ENCODE measurements at regions of chr5 and their contacts with region 1.

Region 1: DNA sequence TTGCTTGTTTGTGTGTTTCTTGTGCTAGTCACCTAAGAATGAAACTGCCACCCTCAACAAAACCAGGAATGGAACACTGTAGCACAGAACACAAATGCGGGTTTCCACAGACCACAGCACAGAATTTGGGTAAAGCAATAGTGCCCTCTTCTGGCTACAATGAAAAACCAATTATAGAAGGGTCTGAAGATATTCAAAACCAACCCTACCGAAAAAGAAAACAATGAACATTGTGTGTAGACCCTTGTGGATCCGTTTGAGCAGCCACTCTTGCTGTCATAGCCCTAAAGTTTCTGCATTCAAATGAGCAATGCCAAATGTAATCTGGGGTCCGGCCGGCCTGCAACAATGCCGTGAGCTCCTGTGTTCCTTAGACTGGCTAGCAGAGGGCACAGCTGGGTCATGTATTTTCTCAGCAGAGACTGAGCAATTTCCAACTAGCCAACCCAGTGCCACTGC is 8.3 kb upstream of the ENC1 start:
- DNase-seq: peak; percentile 66
- H3K4me3 ChIP-seq: no peak overlapping the region
- H3K27ac ChIP-seq: no peak overlapping the region
- H3K4me1 ChIP-seq: no peaks in the 10 kb centered on the region
- CTCF ChIP-seq: peak; percentile 94

Region 2: DNA sequence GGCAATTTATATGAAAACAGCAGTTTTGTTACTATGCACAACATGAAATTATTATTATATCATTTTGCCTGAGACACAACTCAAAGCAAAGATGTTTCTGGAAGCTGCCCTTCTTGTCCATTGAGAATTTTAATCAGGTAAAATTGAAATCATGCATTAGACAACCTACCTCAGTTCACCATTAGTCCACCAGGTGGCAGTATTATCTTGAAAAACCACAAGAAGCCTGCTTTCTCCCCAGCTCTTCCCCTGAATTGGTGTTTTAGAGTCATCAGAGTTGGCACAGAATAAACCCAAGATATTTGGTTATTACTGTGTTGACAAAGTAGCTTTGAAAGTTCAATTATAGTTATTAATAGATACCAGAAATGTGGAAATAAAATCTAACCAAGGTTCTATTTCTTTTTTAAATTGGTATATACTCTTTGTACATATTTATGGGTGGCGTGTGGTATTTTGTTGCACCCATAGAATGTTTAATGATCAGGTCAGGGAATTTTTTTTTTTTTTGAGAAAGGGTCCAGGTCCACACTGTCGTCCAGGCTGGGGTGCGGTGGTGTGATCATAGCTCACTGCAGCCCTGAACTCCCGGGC is 1057.7 kb before region 1 on chr5:
- CTCF ChIA-PET with region 1: no interaction called
- POLR2A ChIA-PET with region 1: no interaction called
- intact Hi-C with region 1: loop called (anchors 5 kb)
- DNase-seq: peak; percentile 77
- H3K4me3 ChIP-seq: no peak overlapping the region
- H3K27ac ChIP-seq: no peak overlapping the region
- H3K4me1 ChIP-seq: no peaks in the 10 kb centered on the region
- CTCF ChIP-seq: peak; percentile 94

Region 3: DNA sequence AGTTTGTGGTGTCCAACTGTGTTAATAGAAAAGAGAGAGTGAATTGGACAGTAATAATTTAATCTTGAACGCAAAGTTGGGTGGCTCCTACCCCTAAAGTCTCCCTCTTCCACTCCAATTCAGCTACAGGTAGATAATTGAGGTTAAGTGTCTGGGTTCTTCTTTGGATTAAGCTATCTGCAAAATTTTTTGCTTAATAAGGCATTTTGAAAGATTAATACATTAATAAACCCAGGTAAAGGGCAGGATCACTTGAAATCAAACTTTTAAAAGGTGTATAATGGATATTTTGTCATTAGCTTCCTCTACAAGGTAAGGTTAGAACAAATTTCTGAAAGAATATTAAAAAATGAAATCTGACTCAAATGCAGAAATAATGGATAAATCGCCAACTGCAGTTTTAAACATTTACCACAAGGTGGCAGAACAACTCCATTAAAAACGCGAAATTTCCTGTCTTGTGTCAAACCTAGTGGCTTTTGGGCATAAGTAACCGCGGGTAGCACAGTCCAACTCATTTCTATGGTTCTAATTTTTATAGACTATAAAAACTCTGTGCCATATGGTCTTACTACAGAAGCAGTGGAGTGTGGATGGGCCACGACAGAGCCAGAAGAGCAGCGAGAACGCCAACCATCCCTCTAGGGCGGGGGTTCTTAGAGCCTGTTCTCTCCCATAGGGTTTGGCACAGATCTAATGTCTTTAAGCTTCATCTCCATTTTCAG is 746.4 kb before region 1 on chr5:
- CTCF ChIA-PET with region 1: interaction called, 5 read pairs
- POLR2A ChIA-PET with region 1: interaction called, 3 read pairs
- intact Hi-C with region 1: loop called (anchors 1 kb)
- DNase-seq: peak; percentile 77
- H3K4me3 ChIP-seq: no peak overlapping the region
- H3K27ac ChIP-seq: no peak overlapping the region
- H3K4me1 ChIP-seq: peaks cover 4% of the 10 kb centered on the region
- CTCF ChIP-seq: peak; percentile 97

Region 4: GRCh38 chr5:74035521-74035981 is 613.3 kb before region 1 on chr5:
- CTCF ChIA-PET with region 1: no interaction called
- POLR2A ChIA-PET with region 1: no interaction called
- intact Hi-C with region 1: loop called (anchors 2 kb)
- DNase-seq: peak; percentile 35
- H3K4me3 ChIP-seq: no peak overlapping the region
- H3K27ac ChIP-seq: no peak overlapping the region
- H3K4me1 ChIP-seq: no peaks in the 10 kb centered on the region
- CTCF ChIP-seq: peak; percentile 65

Region 5: DNA sequence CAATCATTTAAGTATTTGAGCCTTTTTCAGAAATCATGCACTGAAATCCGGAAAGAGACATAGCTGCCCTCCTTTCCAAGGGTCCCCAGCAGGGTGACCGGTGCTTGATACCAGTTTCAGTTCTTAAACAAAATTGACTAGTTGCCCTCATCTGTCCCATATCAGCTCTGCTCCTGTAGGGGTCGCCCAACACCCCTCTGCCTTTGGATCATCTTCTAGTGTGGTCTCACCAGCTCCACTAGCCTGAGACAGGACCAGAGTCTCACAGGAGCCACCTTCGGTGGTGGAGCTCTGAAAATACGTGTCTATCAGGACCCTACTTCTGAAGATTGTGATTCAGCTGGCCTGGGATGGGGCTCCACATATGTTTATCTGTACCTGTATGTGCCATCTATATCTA is 436.5 kb before region 1 on chr5:
- CTCF ChIA-PET with region 1: no interaction called
- POLR2A ChIA-PET with region 1: no interaction called
- intact Hi-C with region 1: loop called (anchors 5 kb)
- DNase-seq: peak; percentile 35
- H3K4me3 ChIP-seq: no peak overlapping the region
- H3K27ac ChIP-seq: no peak overlapping the region
- H3K4me1 ChIP-seq: no peaks in the 10 kb centered on the region
- CTCF ChIP-seq: peak; percentile 71

Region 6: GRCh38 chr5:74822288-74822687 is 173.4 kb after region 1 on chr5:
- CTCF ChIA-PET with region 1: no interaction called
- POLR2A ChIA-PET with region 1: no interaction called
- intact Hi-C with region 1: no loop called
- DNase-seq: no peak
- H3K4me3 ChIP-seq: no peak overlapping the region
- H3K27ac ChIP-seq: no peak overlapping the region
- H3K4me1 ChIP-seq: no peaks in the 10 kb centered on the region
- CTCF ChIP-seq: no peak